ENCODE measurements at regions of chr16 and their contacts with region 1.

Region 1: DNA sequence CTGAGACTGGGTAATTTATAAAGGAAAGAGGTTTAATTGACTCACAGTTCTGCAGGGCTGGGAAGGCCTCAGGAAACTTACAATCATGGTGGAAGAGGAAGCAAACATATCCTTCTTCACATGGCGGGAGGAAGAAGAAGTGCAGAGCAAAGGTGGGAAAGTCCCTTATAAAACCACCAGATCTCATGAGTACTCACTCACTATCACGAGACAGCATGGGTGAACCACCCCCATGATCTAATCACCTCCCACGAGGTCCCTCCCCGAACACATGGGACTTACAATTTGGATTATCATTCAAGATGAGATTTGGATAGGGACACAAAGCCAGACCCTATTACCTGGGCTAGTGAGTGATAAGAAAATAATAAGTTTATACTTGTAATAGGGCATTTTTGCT is 70.6 kb upstream of the HS3ST2 start:
- DNase-seq: no peak
- ATAC-seq: no peak
- H3K4me3 ChIP-seq: no peak overlapping the region
- H3K4me3 Mint-ChIP-seq: no peak overlapping the region
- H3K27ac ChIP-seq: no peak overlapping the region
- H3K27ac Mint-ChIP-seq: no peak overlapping the region
- H3K4me1 ChIP-seq: no peaks in the 10 kb centered on the region
- H3K4me1 Mint-ChIP-seq: no peaks in the 10 kb centered on the region
- H3K27me3 ChIP-seq: no peaks in the 10 kb centered on the region
- H3K27me3 Mint-ChIP-seq: peaks cover 29% of the 10 kb centered on the region
- CTCF ChIP-seq: no peak

Region 2: GRCh38 chr16:22813223-22813945 is 70.0 kb after region 1 on chr16:
- CTCF ChIA-PET with region 1: no interaction called
- POLR2A ChIA-PET with region 1: no interaction called
- intact Hi-C with region 1: loop called in 1 of 2 experiments (anchors 2 kb)
- DNase-seq: no peak
- ATAC-seq: no peak
- H3K4me3 ChIP-seq: no peak overlapping the region
- H3K4me3 Mint-ChIP-seq: no peak overlapping the region
- H3K27ac ChIP-seq: no peak overlapping the region
- H3K27ac Mint-ChIP-seq: no peak overlapping the region
- H3K4me1 ChIP-seq: no peaks in the 10 kb centered on the region
- H3K4me1 Mint-ChIP-seq: no peaks in the 10 kb centered on the region
- H3K27me3 ChIP-seq: peaks cover 0 to 12% of the 10 kb centered on the region in 2 experiments
- H3K27me3 Mint-ChIP-seq: peaks cover 42% of the 10 kb centered on the region
- CTCF ChIP-seq: no peak